MCF 10A (cell line): ENCODE measurements at regions of chr15 and their contacts with region 1.

Region 1: GRCh38 chr15:96356494-96357455 is 26.3 kb downstream of the NR2F2 start:
- DNase-seq: peak; percentile 75
- H3K4me3 Mint-ChIP-seq: peak overlapping the region; percentile 73
- H3K27ac Mint-ChIP-seq: no peak overlapping the region
- H3K4me1 Mint-ChIP-seq: peaks cover 5% of the 10 kb centered on the region
- H3K27me3 Mint-ChIP-seq: no peaks in the 10 kb centered on the region
- CTCF ChIP-seq: peak; percentile 95

Region 2: GRCh38 chr15:96200357-96200967 is 156.3 kb before region 1 on chr15:
- CTCF ChIA-PET with region 1: no interaction called
- POLR2A ChIA-PET with region 1: no interaction called
- intact Hi-C with region 1: no loop called
- DNase-seq: no peak
- H3K4me3 Mint-ChIP-seq: no peak overlapping the region
- H3K27ac Mint-ChIP-seq: no peak overlapping the region
- H3K4me1 Mint-ChIP-seq: no peaks in the 10 kb centered on the region
- H3K27me3 Mint-ChIP-seq: no peaks in the 10 kb centered on the region
- CTCF ChIP-seq: no peak

Region 3: GRCh38 chr15:96345560-96346399 is 11.0 kb before region 1 on chr15:
- CTCF ChIA-PET with region 1: interaction called, 16 read pairs
- POLR2A ChIA-PET with region 1: interaction called, 12 read pairs
- intact Hi-C with region 1: no loop called
- DNase-seq: peak; percentile 23
- H3K4me3 Mint-ChIP-seq: no peak overlapping the region
- H3K27ac Mint-ChIP-seq: no peak overlapping the region
- H3K4me1 Mint-ChIP-seq: peaks cover 9% of the 10 kb centered on the region
- H3K27me3 Mint-ChIP-seq: no peaks in the 10 kb centered on the region
- CTCF ChIP-seq: peak; percentile 48

Region 4: GRCh38 chr15:96428742-96429141 is 72.0 kb after region 1 on chr15:
- CTCF ChIA-PET with region 1: no interaction called
- POLR2A ChIA-PET with region 1: no interaction called
- intact Hi-C with region 1: loop called (anchors 2 kb)
- DNase-seq: peak; percentile 85
- H3K4me3 Mint-ChIP-seq: no peak overlapping the region
- H3K27ac Mint-ChIP-seq: no peak overlapping the region
- H3K4me1 Mint-ChIP-seq: no peaks in the 10 kb centered on the region
- H3K27me3 Mint-ChIP-seq: peaks cover 51% of the 10 kb centered on the region
- CTCF ChIP-seq: no peak

Region 5: GRCh38 chr15:96474231-96474664 is 117.5 kb after region 1 on chr15:
- CTCF ChIA-PET with region 1: no interaction called
- POLR2A ChIA-PET with region 1: no interaction called
- intact Hi-C with region 1: no loop called
- DNase-seq: no peak
- H3K4me3 Mint-ChIP-seq: no peak overlapping the region
- H3K27ac Mint-ChIP-seq: no peak overlapping the region
- H3K4me1 Mint-ChIP-seq: no peaks in the 10 kb centered on the region
- H3K27me3 Mint-ChIP-seq: peaks cover 51% of the 10 kb centered on the region
- CTCF ChIP-seq: no peak

Region 6: DNA sequence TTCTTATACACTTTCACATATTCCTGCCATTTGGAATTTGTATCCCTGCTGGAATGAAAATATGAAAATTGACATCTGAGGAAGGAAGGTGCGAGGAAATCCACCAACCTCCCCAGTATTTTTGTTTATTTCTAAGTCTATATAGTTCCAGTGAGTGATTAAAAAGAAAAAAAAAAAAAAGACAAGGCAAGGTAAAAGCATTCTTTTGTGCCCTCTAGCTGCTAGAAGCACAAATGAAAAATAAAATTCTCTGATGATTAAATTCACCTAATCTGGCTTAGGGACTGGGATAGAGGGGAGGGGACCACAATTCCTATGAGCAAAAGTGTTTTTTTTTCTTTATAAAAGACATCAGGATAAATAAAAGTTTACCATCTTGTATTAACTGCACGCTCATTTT is 344.7 kb after region 1 on chr15:
- CTCF ChIA-PET with region 1: no interaction called
- POLR2A ChIA-PET with region 1: no interaction called
- intact Hi-C with region 1: loop called (anchors 1 kb)
- DNase-seq: no peak
- H3K4me3 Mint-ChIP-seq: no peak overlapping the region
- H3K27ac Mint-ChIP-seq: no peak overlapping the region
- H3K4me1 Mint-ChIP-seq: no peaks in the 10 kb centered on the region
- H3K27me3 Mint-ChIP-seq: peaks cover 93% of the 10 kb centered on the region
- CTCF ChIP-seq: peak; percentile 20

Region 7: DNA sequence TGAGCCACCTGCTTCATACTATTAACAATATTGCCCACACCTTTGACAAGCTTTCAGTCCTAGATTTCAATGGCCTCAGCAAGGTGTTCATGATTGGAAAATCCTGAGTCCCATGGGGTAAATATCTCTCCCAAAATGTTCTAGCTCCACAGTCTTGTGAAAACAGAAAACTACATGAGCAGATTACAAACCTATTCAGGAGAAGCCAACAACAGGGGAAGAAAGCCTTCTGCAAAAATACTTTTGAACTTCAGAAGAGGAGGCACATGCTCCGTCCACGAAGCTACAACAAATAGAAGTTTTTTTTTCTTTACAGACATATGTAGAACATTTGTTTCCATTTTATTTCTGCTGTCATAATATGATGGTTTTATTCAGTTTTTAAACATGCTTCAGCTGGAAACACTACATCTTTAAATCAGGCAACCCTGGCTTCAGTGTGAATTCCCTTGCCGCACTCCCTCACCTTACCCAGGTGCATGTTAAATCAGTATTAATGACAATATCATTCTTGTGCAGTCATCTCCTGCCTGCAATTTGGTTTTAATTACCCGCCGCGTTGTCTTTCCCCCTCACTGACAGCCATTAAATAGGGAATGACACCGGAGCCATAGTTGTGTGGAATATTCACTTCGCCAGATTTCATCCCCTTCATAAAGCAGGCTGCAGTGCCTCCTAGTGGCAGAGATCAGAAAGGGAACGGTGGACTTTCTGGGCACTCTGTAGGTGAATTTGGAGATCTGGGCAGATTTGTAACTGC is 878.3 kb after region 1 on chr15:
- CTCF ChIA-PET with region 1: interaction called, 10 read pairs
- POLR2A ChIA-PET with region 1: interaction called, 3 read pairs
- intact Hi-C with region 1: loop called (anchors 2 kb)
- DNase-seq: peak; percentile 61
- H3K4me3 Mint-ChIP-seq: no peak overlapping the region
- H3K27ac Mint-ChIP-seq: no peak overlapping the region
- H3K4me1 Mint-ChIP-seq: peaks cover 17% of the 10 kb centered on the region
- H3K27me3 Mint-ChIP-seq: peaks cover 70% of the 10 kb centered on the region
- CTCF ChIP-seq: peak; percentile 79